Caco-2 (cell line): ENCODE measurements at regions of chr12 and their contacts with region 1.

Region 1: DNA sequence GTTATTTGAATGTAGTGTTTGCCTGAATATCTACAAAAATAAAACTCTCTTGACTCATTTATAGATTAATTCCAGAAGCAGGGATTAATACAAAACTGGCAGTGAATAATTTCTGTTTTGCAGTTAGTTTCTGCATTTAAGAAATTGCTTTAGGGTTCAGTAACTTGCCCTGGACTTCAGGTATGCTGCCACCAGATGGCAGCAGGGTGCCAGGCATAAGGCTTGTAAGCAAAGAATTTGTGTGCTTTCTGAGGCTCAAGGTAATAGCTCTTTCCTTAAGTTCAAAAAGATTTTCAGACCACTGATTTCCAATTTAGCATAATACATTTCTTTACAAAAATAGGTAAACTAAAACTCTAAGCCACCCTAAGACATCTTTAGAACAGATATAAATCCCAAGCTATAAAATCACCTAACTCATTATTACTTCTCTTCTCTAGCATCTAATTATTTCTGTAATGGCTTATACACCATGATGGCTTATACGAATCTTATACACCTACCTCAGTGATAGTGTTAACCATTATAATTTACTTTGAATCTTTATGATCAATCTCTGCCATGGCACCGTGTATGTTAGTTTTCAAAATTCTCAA is 398.3 kb downstream of the APAF1 start:
- DNase-seq: peak; percentile 53 to 66
- H3K4me3 ChIP-seq: no peak overlapping the region
- H3K4me3 Mint-ChIP-seq: no peak overlapping the region
- H3K27ac Mint-ChIP-seq: no peak overlapping the region
- H3K4me1 ChIP-seq: no peaks in the 10 kb centered on the region
- H3K4me1 Mint-ChIP-seq: no peaks in the 10 kb centered on the region
- H3K27me3 ChIP-seq: no peaks in the 10 kb centered on the region
- H3K27me3 Mint-ChIP-seq: peaks cover 11% of the 10 kb centered on the region
- CTCF ChIP-seq: peak; percentile 86 to 89

Region 2: DNA sequence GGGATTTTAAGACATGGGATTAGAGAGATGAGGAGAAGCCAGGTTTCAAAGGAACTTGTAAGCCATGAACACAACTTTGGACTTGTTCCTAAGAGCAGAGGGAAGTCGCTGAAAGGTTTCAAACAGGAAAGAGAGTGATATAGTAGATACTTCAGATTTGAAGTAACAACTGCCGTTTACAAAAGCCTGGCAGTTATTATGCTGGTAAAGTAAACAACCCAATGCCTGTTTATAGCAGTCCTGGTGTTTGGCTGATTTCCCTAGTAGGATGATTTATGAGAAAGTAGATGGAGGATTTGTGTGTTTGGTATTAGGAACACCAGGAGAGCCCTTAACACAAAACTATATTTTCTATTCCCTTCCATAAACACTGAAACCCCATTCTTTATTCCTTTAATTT is 1295.1 kb before region 1 on chr12:
- CTCF ChIA-PET with region 1: no interaction called
- POLR2A ChIA-PET with region 1: no interaction called
- intact Hi-C with region 1: no loop called
- DNase-seq: no peak
- H3K4me3 ChIP-seq: no peak overlapping the region
- H3K4me3 Mint-ChIP-seq: no peak overlapping the region
- H3K27ac Mint-ChIP-seq: no peak overlapping the region
- H3K4me1 ChIP-seq: peaks cover 3% of the 10 kb centered on the region
- H3K4me1 Mint-ChIP-seq: peaks cover 6% of the 10 kb centered on the region
- H3K27me3 ChIP-seq: no peaks in the 10 kb centered on the region
- H3K27me3 Mint-ChIP-seq: no peaks in the 10 kb centered on the region
- CTCF ChIP-seq: no peak

Region 3: GRCh38 chr12:99658671-99659349 is 615.4 kb after region 1 on chr12:
- CTCF ChIA-PET with region 1: interaction called, 4 read pairs
- POLR2A ChIA-PET with region 1: no interaction called
- intact Hi-C with region 1: loop called (anchors 1 kb)
- DNase-seq: no peak
- H3K4me3 ChIP-seq: no peak overlapping the region
- H3K4me3 Mint-ChIP-seq: no peak overlapping the region
- H3K27ac Mint-ChIP-seq: no peak overlapping the region
- H3K4me1 ChIP-seq: no peaks in the 10 kb centered on the region
- H3K4me1 Mint-ChIP-seq: no peaks in the 10 kb centered on the region
- H3K27me3 ChIP-seq: no peaks in the 10 kb centered on the region
- H3K27me3 Mint-ChIP-seq: peaks cover 5% of the 10 kb centered on the region
- CTCF ChIP-seq: peak; percentile 5 to 16

Region 4: GRCh38 chr12:99767809-99768208 is 724.4 kb after region 1 on chr12:
- CTCF ChIA-PET with region 1: interaction called, 3 read pairs
- POLR2A ChIA-PET with region 1: no interaction called
- intact Hi-C with region 1: loop called (anchors 5 kb)
- DNase-seq: no peak
- H3K4me3 ChIP-seq: no peak overlapping the region
- H3K4me3 Mint-ChIP-seq: no peak overlapping the region
- H3K27ac Mint-ChIP-seq: no peak overlapping the region
- H3K4me1 ChIP-seq: no peaks in the 10 kb centered on the region
- H3K4me1 Mint-ChIP-seq: no peaks in the 10 kb centered on the region
- H3K27me3 ChIP-seq: no peaks in the 10 kb centered on the region
- H3K27me3 Mint-ChIP-seq: peaks cover 8% of the 10 kb centered on the region
- CTCF ChIP-seq: peak; percentile 49 to 51